ENCODE measurements at regions of chr6 and their contacts with region 1.

Region 1: DNA sequence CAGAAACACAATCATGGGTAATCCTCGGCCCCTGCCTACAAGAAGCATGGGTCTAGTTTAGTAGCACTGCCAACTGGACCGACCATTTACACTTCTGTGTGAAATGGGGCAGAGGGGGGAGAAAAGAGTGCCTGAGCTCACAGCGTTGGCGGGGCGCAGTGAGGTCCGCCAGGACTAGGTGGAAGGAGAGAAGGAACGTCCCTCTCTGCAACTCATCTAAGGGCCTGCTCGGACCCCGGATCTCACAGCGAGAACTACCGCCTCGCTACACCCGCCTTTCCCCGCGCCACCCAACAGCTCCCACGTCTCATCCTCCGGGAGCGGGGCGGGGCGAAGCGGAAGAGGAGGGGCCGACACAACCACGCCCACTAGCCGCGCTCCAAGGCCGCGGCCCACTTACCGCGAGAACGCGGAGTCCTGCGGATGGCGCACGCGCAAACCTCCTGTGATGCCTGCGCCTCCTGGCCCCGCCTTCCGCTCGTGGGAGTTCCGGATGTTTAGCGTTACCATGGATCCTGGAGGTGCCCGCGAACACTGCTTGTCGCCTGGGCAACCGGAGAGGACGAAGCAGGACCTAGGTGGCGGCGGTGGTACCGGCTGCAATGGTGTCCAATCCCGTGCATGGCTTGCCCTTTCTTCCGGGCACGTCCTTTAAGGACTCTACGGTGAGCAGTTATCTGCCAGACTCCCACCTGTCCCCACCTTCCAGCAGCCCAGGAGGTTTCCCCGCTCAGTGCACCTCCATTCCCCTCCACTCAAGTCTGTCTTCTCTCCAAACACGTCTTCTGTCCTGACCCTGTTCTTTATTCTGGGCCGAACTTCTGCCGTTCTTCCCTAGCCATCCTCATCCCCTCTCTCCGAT is at the start of gene EFHC1:
- DNase-seq: peak; percentile 84
- H3K4me3 ChIP-seq: peak within 1 kb of the TSS; percentile 84
- H3K27me3 ChIP-seq: no peaks in the 10 kb centered on the region
- CTCF ChIP-seq: no peak
- polyA plus RNA-seq, gene EFHC1: 16.6 and 26.3 TPM in 2 replicates

Region 2: DNA sequence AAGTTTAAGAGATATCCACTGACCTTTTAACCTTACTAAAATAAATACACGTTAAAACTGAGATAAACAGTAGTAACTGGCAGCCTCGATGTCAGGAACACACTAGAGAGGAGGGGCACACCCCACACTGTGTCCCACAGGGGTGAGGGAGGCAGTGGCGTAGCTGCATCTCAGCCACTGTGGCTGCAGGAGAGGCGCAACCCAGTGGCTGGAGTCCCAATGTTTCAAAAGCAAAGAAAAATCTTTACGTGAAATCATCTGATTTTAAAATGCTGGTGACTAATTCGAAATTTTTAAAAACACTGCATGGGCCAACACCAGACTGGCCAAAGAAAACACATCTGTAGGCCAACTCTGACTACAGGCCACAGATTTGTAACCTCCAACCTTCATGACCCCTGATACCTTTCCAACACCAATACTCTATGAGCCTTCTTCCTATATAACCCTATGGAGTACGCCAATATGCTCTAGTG is 102.1 kb after region 1 on chr6:
- CTCF ChIA-PET with region 1: no interaction called
- POLR2A ChIA-PET with region 1: no interaction called
- DNase-seq: no peak
- H3K4me3 ChIP-seq: no peak overlapping the region
- H3K27me3 ChIP-seq: no peaks in the 10 kb centered on the region
- CTCF ChIP-seq: no peak

Region 3: GRCh38 chr6:52543729-52544601 is 123.9 kb after region 1 on chr6:
- CTCF ChIA-PET with region 1: interaction called, 10 read pairs
- POLR2A ChIA-PET with region 1: interaction called, 4 read pairs
- DNase-seq: no peak
- H3K4me3 ChIP-seq: no peak overlapping the region
- H3K27me3 ChIP-seq: no peaks in the 10 kb centered on the region
- CTCF ChIP-seq: no peak

Region 4: GRCh38 chr6:52577022-52577777 is 157.2 kb after region 1 on chr6 and contains the start of gene TRAM2:
- CTCF ChIA-PET with region 1: interaction called, 24 read pairs
- POLR2A ChIA-PET with region 1: interaction called, 13 read pairs
- DNase-seq: no peak
- H3K4me3 ChIP-seq: peak within 1 kb of the TSS; percentile 91
- H3K27me3 ChIP-seq: no peaks in the 10 kb centered on the region
- CTCF ChIP-seq: 0 out of 2 replicates have a peak, but pooled peaks have one; percentile 9
- polyA plus RNA-seq, gene TRAM2: 134 and 146 TPM in 2 replicates

Region 5: DNA sequence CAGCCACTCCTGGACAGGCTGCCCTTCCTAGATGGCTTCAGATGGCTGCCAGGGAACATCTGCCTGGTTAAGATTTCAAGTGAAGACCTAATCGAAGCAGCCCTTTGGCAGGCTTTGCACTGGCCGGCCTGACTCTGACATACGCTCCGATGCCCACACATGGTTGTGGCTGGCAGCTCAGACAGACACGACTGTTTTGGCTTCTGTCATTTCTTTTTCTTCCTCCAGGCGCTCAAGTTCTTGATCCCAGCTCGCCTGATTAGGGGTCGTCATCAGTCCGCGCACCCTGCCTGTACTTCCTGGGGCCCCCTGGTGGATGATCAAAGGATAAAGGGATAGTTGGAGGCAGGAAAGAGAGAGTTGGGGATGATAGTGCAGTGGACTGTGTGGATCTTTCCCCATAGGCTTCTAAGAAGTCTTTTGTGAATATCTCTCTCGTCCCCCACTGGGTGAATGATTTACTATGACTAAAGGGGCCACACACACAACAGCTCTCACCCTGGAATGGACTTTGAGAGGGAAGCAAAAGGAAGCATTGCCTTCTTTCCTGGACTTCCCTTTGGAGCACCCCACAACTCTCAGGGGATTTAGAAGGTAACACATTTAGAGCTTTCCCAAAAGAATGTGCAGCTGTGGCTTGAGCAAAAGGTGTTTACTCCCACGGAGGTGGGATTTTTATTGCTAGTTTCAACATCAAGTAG is 178.2 kb after region 1 on chr6:
- CTCF ChIA-PET with region 1: interaction called, 59 read pairs
- POLR2A ChIA-PET with region 1: interaction called, 4 read pairs
- DNase-seq: no peak
- H3K4me3 ChIP-seq: no peak overlapping the region
- H3K27me3 ChIP-seq: no peaks in the 10 kb centered on the region
- CTCF ChIP-seq: peak; percentile 82

Region 6: DNA sequence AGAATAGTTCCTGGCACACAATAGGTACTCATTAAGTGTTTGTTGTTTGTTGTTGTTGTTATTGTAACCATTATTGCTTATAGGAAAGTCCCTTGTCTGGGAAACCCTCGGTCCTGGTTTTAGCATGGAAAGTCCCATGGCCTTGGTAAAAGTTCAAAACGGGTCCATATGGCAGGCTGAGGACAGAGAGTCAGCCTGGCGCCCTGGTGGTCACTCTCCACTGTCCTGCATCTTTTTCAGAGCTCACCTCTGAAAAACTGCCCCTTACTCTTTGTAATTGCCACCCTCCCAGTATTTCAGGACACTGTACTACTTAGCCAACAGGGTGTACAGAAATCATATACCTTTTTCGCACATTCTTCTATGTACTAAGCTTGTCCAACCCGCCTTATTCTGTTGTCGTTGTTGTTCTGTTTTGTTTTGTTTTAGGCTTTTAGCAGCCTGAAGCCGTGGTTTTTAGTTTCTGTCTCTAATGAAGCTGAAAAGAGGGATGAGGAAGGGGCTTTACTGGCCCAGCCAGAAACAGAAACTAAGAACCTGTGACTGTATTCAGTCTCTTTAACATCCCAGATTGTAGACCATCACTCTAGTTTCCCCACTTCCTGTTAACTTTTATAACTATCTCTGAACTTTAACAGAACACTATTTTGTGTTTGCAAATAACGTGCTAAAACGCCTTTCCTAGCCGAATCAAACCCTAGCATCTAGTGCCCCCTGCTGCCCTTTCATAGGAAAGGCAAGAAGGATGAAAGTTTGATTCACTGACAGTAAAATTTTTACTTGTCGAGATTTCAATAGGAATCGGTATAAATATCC is 243.3 kb after region 1 on chr6:
- CTCF ChIA-PET with region 1: interaction called, 62 read pairs
- POLR2A ChIA-PET with region 1: interaction called, 5 read pairs
- DNase-seq: peak; percentile 29
- H3K4me3 ChIP-seq: peak overlapping the region; percentile 82
- H3K27me3 ChIP-seq: no peaks in the 10 kb centered on the region
- CTCF ChIP-seq: peak; percentile 76

Region 7: GRCh38 chr6:52749556-52750152 is 329.6 kb after region 1 on chr6:
- CTCF ChIA-PET with region 1: no interaction called
- POLR2A ChIA-PET with region 1: no interaction called
- DNase-seq: no peak
- H3K4me3 ChIP-seq: no peak overlapping the region
- H3K27me3 ChIP-seq: no peaks in the 10 kb centered on the region
- CTCF ChIP-seq: no peak

Measured in BJ (cell line).